ENCODE measurements at regions of chr2 and their contacts with region 1.

Region 1: GRCh38 chr2:176126929-176127773 is 2.4 kb upstream of the HOXD8 start:
- DNase-seq: peak; percentile 68
- H3K4me3 ChIP-seq: peak overlapping the region in 2 of 3 experiments; percentile 48 to 67
- H3K27ac ChIP-seq: no peak overlapping the region
- H3K4me1 ChIP-seq: peaks cover 33% of the 10 kb centered on the region
- H3K27me3 ChIP-seq: peaks cover 5 to 6% of the 10 kb centered on the region in 2 experiments
- CTCF ChIP-seq: peak; percentile 61 to 66
- POLR2A ChIP-seq: no peak

Region 2: GRCh38 chr2:176110975-176111663 is 16.0 kb before region 1 on chr2:
- CTCF ChIA-PET with region 1: interaction called, 24 read pairs
- POLR2A ChIA-PET with region 1: no interaction called
- dilution Hi-C with region 1: no loop called
- intact Hi-C with region 1: no loop called
- DNase-seq: peak; percentile 74
- H3K4me3 ChIP-seq: no peak overlapping the region
- H3K27ac ChIP-seq: no peak overlapping the region
- H3K4me1 ChIP-seq: no peaks in the 10 kb centered on the region
- H3K27me3 ChIP-seq: peaks cover 81 to 96% of the 10 kb centered on the region in 2 experiments
- CTCF ChIP-seq: peak; percentile 87 to 93
- POLR2A ChIP-seq: no peak

Region 3: GRCh38 chr2:176643646-176644045 is 516.5 kb after region 1 on chr2:
- CTCF ChIA-PET with region 1: interaction called, 82 read pairs
- POLR2A ChIA-PET with region 1: no interaction called
- dilution Hi-C with region 1: loop called (anchors 25 kb)
- intact Hi-C with region 1: loop called (anchors 1 kb)
- DNase-seq: peak; percentile 39
- H3K4me3 ChIP-seq: no peak overlapping the region
- H3K27ac ChIP-seq: no peak overlapping the region
- H3K4me1 ChIP-seq: peaks cover 10% of the 10 kb centered on the region
- H3K27me3 ChIP-seq: no peaks in the 10 kb centered on the region
- CTCF ChIP-seq: no peak
- POLR2A ChIP-seq: no peak

Region 4: GRCh38 chr2:177056481-177056929 is 929.4 kb after region 1 on chr2:
- CTCF ChIA-PET with region 1: interaction called, 5 read pairs
- POLR2A ChIA-PET with region 1: no interaction called
- dilution Hi-C with region 1: no loop called
- intact Hi-C with region 1: loop called (anchors 5 kb)
- DNase-seq: no peak
- H3K4me3 ChIP-seq: no peak overlapping the region
- H3K27ac ChIP-seq: no peak overlapping the region
- H3K4me1 ChIP-seq: no peaks in the 10 kb centered on the region
- H3K27me3 ChIP-seq: no peaks in the 10 kb centered on the region
- CTCF ChIP-seq: peak in 1 of 2 donors; percentile 19
- POLR2A ChIP-seq: no peak

Region 5: GRCh38 chr2:177212106-177212890 is 1085.1 kb after region 1 on chr2 and contains the start of gene HNRNPA3:
- CTCF ChIA-PET with region 1: no interaction called
- POLR2A ChIA-PET with region 1: no interaction called
- dilution Hi-C with region 1: no loop called
- intact Hi-C with region 1: loop called (anchors 2 kb)
- DNase-seq: peak; percentile 100
- H3K4me3 ChIP-seq: peak within 1 kb of the TSS; percentile 99 to 100 (median 100)
- H3K27ac ChIP-seq: peak within 1 kb of the TSS; percentile 100
- H3K4me1 ChIP-seq: peaks cover 33% of the 10 kb centered on the region
- H3K27me3 ChIP-seq: no peaks in the 10 kb centered on the region
- CTCF ChIP-seq: peak in 1 of 2 donors; percentile 2
- POLR2A ChIP-seq: peak; percentile 97
- total RNA-seq, gene HNRNPA3: 316 and 322 TPM in 2 replicates

Measured in endothelial cell of umbilical vein (primary cell).